ENCODE measurements at regions of chr18 and their contacts with region 1.

Region 1: GRCh38 chr18:32261003-32261402 is 71.2 kb downstream of the MEP1B start:
- DNase-seq: no peak
- H3K4me3 ChIP-seq: no peak overlapping the region
- H3K27ac ChIP-seq: no peak overlapping the region
- H3K4me1 ChIP-seq: peaks cover 0 to 23% (median 9%) of the 10 kb centered on the region in 4 donors
- H3K27me3 ChIP-seq: no peaks in the 10 kb centered on the region
- CTCF ChIP-seq: peak in 2 of 5 experiments; percentile 4 to 8
- EP300 ChIP-seq: no peak
- POLR2A ChIP-seq: no peak

Region 2: DNA sequence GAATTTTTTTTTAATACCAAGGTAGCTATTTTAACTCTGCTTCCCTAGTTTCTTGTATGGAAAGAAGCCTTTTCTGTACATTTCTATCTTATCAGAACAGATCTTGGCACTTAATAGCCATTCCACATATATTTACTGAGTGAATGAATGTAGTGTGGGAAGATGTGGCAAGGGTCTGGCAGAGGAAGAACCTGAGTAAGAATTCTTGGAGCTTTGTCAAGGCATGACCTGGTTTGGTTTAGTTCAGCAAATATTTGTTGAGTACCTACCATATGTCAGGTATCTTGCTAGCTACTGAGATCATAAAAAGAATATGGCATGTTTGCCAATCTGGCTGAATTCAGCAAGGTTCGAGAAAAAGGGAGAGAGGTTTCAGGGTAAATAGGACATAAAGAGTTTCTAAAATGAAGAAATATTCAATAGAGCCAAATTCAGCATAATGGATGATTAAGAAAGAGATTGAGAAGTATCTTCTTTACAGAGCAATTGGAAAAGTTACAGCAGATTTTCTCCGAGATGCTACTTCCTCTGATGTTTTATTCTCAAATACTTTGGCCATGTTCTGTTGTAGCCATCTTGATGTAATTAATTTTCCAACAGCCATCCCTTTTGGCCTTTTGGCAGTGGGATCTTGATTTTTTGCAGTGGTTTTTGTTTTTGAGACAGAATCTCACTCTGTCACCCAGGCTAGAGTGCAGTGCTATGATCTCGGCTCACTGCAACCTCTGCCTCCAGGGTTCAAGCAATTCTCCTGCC is 92.8 kb before region 1 on chr18:
- in situ Hi-C with region 1: loop called in 1 of 4 experiments (anchors 10 kb)
- intact Hi-C with region 1: no loop called
- DNase-seq: no peak
- H3K4me3 ChIP-seq: no peak overlapping the region
- H3K27ac ChIP-seq: no peak overlapping the region
- H3K4me1 ChIP-seq: no peaks in the 10 kb centered on the region
- H3K27me3 ChIP-seq: no peaks in the 10 kb centered on the region
- CTCF ChIP-seq: no peak
- EP300 ChIP-seq: no peak
- POLR2A ChIP-seq: no peak

Region 3: DNA sequence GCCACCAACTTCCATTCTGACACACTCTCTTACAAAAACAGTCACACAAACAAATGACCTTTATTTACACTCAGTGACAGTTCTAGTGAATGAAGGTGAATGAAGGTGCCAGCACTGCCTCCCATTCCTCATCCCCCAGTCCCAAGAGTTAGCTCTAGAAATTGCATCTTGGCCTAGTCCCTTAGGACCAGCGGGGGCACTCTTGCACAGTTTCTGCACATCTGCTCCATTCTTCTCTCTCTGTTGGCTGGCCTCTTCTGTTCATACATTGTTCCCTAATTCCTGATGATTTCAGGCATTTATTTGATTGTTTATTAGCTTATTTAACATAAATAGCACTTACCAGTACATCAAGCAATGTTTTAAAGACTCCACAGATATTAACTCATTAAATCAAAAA is 178.8 kb after region 1 on chr18:
- in situ Hi-C with region 1: no loop called
- intact Hi-C with region 1: no loop called
- DNase-seq: no peak
- H3K4me3 ChIP-seq: no peak overlapping the region
- H3K27ac ChIP-seq: no peak overlapping the region
- H3K4me1 ChIP-seq: peaks cover 0 to 28% (median 9%) of the 10 kb centered on the region in 4 donors
- H3K27me3 ChIP-seq: no peaks in the 10 kb centered on the region
- CTCF ChIP-seq: peak in 2 of 5 experiments; percentile 4 to 6
- EP300 ChIP-seq: no peak
- POLR2A ChIP-seq: no peak